Panc1 (cell line): ENCODE measurements at regions of chr7 and their contacts with region 1.

Region 1: GRCh38 chr7:37848297-37848696 is at the start of gene NME8:
- DNase-seq: no peak
- ATAC-seq: no peak
- H3K4me3 ChIP-seq: no peak within 1 kb of the TSS
- H3K27ac ChIP-seq: no peak within 1 kb of the TSS
- H3K4me1 ChIP-seq: no peaks in the 10 kb centered on the region
- H3K27me3 ChIP-seq: peaks cover 3% of the 10 kb centered on the region
- CTCF ChIP-seq: no peak
- total RNA-seq, gene NME8: not detected

Region 2: DNA sequence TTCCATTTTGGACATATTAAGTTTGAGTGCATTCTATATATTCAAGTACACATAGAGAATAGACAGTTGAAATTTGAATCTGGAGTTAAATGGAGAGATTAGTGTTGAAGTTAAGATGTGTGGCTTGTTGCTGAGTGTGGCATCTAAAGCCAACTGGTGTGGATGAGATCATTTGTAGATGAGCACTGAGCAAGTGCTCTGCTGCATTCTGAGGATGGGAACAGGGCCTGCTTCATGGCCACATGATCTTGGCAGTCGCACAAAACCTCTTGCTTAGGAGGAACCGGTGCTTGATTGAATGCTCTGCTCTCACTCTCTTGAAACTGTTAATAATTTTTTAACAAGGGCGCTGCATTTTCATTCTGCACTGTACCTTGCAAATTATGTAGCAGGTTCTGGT is 134.1 kb after region 1 on chr7:
- CTCF ChIA-PET with region 1: no interaction called
- POLR2A ChIA-PET with region 1: no interaction called
- in situ Hi-C with region 1: no loop called
- intact Hi-C with region 1: no loop called
- DNase-seq: no peak
- ATAC-seq: no peak
- H3K4me3 ChIP-seq: no peak overlapping the region
- H3K27ac ChIP-seq: no peak overlapping the region
- H3K4me1 ChIP-seq: no peaks in the 10 kb centered on the region
- H3K27me3 ChIP-seq: no peaks in the 10 kb centered on the region
- CTCF ChIP-seq: no peak

Region 3: DNA sequence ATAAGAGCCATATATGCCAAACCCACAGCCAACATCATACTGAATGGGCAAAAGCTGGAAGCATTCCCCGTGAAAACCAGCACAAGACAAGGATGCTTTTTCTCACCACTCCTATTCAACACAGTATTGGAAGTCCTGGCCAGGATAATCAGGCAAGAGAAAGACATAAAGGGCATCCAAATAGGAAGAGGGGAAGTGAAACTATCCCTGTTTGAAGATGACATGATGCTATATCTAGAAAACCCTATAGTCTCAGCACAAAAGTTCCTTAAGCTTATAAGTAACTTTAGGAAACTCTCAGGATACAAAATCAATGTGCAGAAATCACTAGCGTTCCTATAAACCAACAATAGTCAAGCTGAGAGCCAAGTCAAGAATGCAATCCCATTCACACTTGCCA is 306.0 kb after region 1 on chr7:
- CTCF ChIA-PET with region 1: no interaction called
- POLR2A ChIA-PET with region 1: no interaction called
- in situ Hi-C with region 1: no loop called
- intact Hi-C with region 1: no loop called
- DNase-seq: no peak
- ATAC-seq: no peak
- H3K4me3 ChIP-seq: no peak overlapping the region
- H3K27ac ChIP-seq: no peak overlapping the region
- H3K4me1 ChIP-seq: no peaks in the 10 kb centered on the region
- H3K27me3 ChIP-seq: no peaks in the 10 kb centered on the region; the same call in 1 of the 2 replicates
- CTCF ChIP-seq: no peak

Region 4: DNA sequence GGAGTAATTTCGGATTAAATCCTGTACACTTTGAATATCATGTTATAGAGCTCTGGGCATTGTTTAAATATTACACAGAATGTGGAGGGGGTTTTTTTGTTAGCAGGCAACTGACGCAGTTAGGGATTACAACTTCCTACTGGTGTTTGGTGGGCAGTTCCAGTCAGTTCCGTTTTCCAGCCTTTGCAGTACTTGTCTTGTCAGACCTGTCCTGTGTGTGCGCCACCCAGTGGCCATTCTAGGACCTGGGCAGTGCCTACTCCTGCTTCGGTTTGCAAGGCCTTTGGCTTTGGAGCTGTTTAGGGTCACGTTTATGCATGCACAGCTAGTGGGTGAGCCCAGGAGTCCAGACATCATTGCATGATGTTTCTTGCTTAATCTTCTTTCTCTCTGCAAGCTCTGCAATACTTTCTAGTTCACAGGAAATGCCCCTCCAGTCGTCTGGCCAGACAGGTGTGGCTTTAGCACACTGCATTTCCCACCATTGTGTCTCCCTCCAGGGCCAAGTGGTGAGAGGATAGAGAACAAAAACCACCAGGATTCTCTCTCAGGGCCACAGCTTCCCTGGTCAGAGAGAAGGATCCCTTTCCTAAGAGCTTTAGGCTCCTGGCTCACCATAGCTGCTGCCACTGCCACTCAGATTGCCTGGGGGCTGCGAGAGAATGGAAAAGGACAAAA is 521.7 kb after region 1 on chr7:
- CTCF ChIA-PET with region 1: interaction called, 10 read pairs
- POLR2A ChIA-PET with region 1: no interaction called
- in situ Hi-C with region 1: no loop called
- intact Hi-C with region 1: no loop called
- DNase-seq: peak; percentile 74
- ATAC-seq: peak; percentile 98
- H3K4me3 ChIP-seq: peak overlapping the region in 1 of 2 experiments; percentile 29; a peak in 2 of 4 replicates
- H3K27ac ChIP-seq: no peak overlapping the region
- H3K4me1 ChIP-seq: no peaks in the 10 kb centered on the region
- H3K27me3 ChIP-seq: no peaks in the 10 kb centered on the region
- CTCF ChIP-seq: peak; percentile 98